ENCODE measurements at regions of chr11 and their contacts with region 1.

Region 1: GRCh38 chr11:1382831-1383607 is 6.7 kb upstream of the BRSK2 start:
- DNase-seq: peak; percentile 64 to 91 (median 79)
- H3K4me3 ChIP-seq: peak overlapping the region; percentile 27 to 77 (median 62)
- H3K27ac ChIP-seq: peak overlapping the region in 57 of 59 donors; percentile 6 to 93 (median 80)
- H3K27me3 ChIP-seq: no peaks in the 10 kb centered on the region
- CTCF ChIP-seq: peak in 5 of 56 donors; percentile 6 to 25 (median 12)

Region 2: GRCh38 chr11:1341928-1342524 is 41.0 kb before region 1 on chr11:
- intact Hi-C with region 1: loop called (anchors 5 kb)
- DNase-seq: peak in 1 of 10 donors; percentile 59
- H3K4me3 ChIP-seq: no peak overlapping the region
- H3K27ac ChIP-seq: peak overlapping the region in 37 of 59 donors; percentile 1 to 82 (median 46)
- H3K27me3 ChIP-seq: no peaks in the 10 kb centered on the region
- CTCF ChIP-seq: peak in 2 of 56 donors; percentile 12 to 13

Measured in dorsolateral prefrontal cortex (tissue), 120 donors.